ENCODE measurements at regions of chr11 and their contacts with region 1.

Region 1: DNA sequence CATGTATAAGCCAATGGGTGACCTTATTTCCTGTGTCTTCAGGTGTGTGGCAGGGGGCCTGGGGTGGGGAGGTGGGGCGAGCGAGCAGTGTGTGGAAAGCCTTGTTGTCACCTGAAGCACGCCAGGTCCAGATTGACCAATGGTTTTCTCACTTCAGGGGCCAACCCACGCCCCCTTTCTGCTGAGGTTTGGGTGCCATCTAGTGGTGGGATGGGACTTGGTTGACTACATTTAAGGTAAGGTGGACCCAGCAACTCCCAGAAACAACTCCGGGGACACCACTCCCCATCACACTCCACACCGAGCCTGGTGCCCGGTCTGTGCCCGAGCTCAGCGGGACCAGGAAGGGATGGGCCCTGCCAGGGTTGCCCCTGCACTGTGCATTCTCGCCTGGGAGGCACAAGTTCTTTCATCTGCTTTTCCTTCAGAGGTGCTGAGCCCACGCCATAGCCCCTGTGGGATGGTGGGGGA is 40.0 kb downstream of the TPCN2 start:
- DNase-seq: peak; percentile 76
- H3K4me3 ChIP-seq: no peak overlapping the region
- H3K27ac ChIP-seq: no peak overlapping the region
- H3K4me1 ChIP-seq: no peaks in the 10 kb centered on the region
- H3K27me3 ChIP-seq: no peaks in the 10 kb centered on the region
- CTCF ChIP-seq: peak; percentile 72 to 75
- POLR2A ChIP-seq: no peak

Region 2: DNA sequence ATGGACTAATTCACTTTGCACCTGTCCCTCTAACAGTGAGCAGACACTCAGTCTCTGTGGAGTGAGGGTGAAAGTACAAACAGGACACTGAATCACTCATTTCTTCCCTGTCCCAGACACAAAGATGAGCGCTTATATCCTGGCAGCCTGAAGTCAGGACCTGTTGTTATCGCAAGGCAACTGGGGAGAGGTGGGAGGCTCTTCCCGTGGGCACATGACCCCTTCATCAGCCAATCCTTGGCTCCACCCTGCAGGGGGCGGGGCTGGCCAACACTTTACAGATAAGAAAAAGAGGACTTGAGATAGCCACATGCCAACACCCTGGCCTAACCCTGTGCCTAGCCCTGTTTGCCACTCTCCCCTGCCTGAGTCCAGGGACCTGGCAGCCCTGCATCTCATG is 307.9 kb before region 1 on chr11:
- CTCF ChIA-PET with region 1: no interaction called
- POLR2A ChIA-PET with region 1: no interaction called
- dilution Hi-C with region 1: no loop called
- intact Hi-C with region 1: no loop called
- DNase-seq: peak; percentile 50
- H3K4me3 ChIP-seq: no peak overlapping the region
- H3K27ac ChIP-seq: no peak overlapping the region
- H3K4me1 ChIP-seq: no peaks in the 10 kb centered on the region
- H3K27me3 ChIP-seq: no peaks in the 10 kb centered on the region
- CTCF ChIP-seq: no peak
- POLR2A ChIP-seq: no peak

Region 3: DNA sequence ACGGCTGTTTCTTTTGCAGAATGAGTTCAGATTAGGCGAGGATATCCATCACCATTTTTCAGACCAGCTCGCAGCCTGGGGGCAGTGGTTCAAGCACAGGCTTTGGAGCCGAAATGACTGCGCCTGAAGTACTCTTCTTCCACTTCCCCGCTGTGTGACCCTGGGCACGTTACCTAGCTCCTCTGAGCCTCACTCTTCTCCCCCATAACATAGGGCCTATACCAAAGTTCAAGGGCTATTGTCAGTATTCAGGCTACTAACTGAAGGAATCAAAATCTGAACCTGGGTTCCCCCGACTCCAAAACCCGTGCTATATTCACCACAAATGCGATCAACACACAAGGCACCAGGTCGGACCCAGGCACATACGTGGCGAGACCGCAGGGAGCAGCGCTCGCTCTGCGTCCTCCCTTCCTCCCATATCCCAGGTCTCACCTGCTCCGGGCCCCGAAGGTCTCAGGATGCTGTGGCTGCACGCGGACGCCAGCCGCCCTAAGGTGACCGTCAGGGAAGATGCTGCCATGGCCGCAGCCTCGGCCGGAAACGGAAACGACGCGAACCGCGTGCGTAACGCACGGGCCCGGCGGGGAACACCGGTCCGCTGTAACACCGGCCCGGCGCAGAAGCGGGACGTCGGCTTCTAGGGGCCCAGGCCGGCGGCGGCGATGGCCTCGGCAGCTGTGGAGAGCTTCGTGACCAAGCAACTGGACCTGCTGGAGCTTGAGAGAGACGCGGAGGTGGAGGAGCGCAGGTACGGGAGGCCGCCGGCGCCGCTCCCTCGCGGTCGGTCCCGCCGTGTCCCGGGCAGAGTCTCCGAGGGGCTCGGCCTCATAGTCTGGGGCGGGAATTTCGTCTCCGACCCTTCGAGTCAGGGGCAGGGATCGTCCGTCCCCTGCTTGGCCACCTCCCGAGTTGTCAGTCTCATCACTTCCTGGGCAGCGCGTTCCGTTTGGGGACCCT is 185.1 kb before region 1 on chr11 and contains the starts of genes IGHMBP2 and MRPL21:
- CTCF ChIA-PET with region 1: no interaction called
- POLR2A ChIA-PET with region 1: no interaction called
- dilution Hi-C with region 1: no loop called
- intact Hi-C with region 1: loop called (anchors 10 kb)
- DNase-seq: peak; percentile 81
- H3K4me3 ChIP-seq: peak within 1 kb of the TSS; percentile 47 to 94 (median 81)
- H3K27ac ChIP-seq: peak within 1 kb of the TSS; percentile 40
- H3K4me1 ChIP-seq: peaks cover 14% of the 10 kb centered on the region
- H3K27me3 ChIP-seq: no peaks in the 10 kb centered on the region
- CTCF ChIP-seq: no peak
- POLR2A ChIP-seq: peak; percentile 94
- total RNA-seq, gene IGHMBP2: 23.5 and 25.1 TPM in 2 replicates
- total RNA-seq, gene MRPL21: 52.2 and 65.1 TPM in 2 replicates

Region 4: GRCh38 chr11:68956142-68956541 is 132.6 kb before region 1 on chr11:
- CTCF ChIA-PET with region 1: interaction called, 4 read pairs
- POLR2A ChIA-PET with region 1: no interaction called
- dilution Hi-C with region 1: no loop called
- intact Hi-C with region 1: loop called (anchors 5 kb)
- DNase-seq: no peak
- H3K4me3 ChIP-seq: no peak overlapping the region
- H3K27ac ChIP-seq: no peak overlapping the region
- H3K4me1 ChIP-seq: peaks cover 8% of the 10 kb centered on the region
- H3K27me3 ChIP-seq: no peaks in the 10 kb centered on the region
- CTCF ChIP-seq: peak; percentile 14 to 30
- POLR2A ChIP-seq: no peak

Measured in endothelial cell of umbilical vein (primary cell).